ENCODE measurements at regions of chr3 and their contacts with region 1.

Region 1: GRCh38 chr3:38346587-38347410 is at the start of gene XYLB:
- DNase-seq: peak; percentile 87
- H3K4me3 Mint-ChIP-seq: peak within 1 kb of the TSS; percentile 76
- H3K27ac Mint-ChIP-seq: peak within 1 kb of the TSS; percentile 62
- H3K4me1 Mint-ChIP-seq: peaks cover 6% of the 10 kb centered on the region
- H3K27me3 Mint-ChIP-seq: peaks cover 4% of the 10 kb centered on the region

Region 2: DNA sequence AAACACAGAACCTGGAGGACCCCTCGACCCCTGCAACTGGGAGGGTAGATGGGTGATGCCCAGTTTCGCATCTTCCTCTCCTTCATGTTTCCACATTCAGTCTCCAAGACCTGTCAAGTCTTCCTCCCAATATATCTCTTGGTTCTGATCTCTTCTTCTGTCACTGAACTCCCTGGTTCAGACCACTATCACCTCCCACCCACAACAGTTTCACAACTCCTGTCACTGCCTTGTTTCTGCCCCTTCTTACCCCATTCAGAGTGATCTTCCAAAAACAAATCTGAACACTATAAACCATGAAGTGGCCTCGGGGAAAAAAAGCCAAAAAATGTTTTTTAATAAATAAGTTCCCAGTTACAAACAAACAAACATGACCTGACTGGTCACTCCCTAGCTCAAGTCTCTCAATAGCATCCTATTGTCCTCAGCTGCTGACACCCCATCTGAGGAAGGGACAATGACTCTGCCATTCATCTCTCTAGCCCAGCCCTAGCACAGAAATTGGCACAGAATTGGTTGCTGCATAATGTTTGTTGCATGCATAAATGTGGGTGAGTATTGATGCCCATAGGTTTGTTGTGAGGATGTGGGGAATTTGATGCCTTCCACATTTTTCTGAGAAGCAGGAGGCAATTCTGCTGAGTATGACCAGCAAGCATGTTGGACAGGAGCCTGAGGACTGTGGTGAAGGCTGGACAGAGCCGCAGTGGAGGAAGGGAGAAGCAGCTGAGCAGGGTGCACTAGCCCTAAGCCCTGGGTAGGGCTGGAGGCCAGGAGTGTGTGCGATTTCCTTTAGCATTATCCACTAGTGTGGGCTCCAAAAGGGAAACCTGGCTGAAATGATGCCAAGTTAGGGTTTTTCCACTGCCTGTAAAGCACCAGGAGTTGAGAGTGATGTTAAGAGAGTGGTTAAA is 12.4 kb before region 1 on chr3:
- CTCF ChIA-PET with region 1: interaction called, 15 read pairs
- DNase-seq: no peak
- H3K4me3 Mint-ChIP-seq: no peak overlapping the region
- H3K27ac Mint-ChIP-seq: no peak overlapping the region
- H3K4me1 Mint-ChIP-seq: no peaks in the 10 kb centered on the region
- H3K27me3 Mint-ChIP-seq: peaks cover 32% of the 10 kb centered on the region

Region 3: DNA sequence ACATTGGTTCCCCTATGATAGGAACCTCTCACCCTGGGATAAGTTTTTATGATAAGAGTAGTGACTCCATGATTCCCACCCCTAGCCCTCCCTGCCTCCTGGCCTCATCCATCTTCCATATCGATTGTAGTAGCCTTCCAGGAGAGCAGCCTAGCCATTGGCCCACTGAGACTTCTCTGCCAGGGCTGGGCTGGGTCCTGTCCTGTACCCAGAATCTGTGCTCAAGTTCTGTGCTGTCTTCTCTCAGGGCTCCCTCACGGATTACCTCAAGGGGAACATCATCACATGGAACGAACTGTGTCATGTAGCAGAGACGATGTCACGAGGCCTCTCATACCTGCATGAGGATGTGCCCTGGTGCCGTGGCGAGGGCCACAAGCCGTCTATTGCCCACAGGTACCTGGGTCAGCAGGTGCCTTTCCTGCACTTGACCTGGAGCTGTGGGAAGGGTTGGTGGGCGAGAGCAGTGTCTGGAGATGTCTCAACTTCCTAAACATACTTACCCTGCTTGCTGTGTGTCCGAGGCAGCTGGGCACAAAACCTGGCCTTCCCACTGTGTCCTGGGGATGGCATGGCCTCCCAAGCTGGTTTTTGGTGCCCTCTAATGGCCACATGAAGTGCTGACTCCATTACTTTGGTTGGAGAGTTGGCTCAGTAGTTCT is 132.8 kb after region 1 on chr3:
- CTCF ChIA-PET with region 1: interaction called, 99 read pairs
- DNase-seq: peak; percentile 68
- H3K4me3 Mint-ChIP-seq: no peak overlapping the region
- H3K27ac Mint-ChIP-seq: no peak overlapping the region
- H3K4me1 Mint-ChIP-seq: peaks cover 2% of the 10 kb centered on the region
- H3K27me3 Mint-ChIP-seq: no peaks in the 10 kb centered on the region

Measured in activated naive CD4-positive, alpha-beta T cell treated with anti-CD3 and anti-CD28 coated beads, Interleukin-2, amount 10 ng/mL, durations not matched to agents 7 days and 5 days (primary cell).